Activated B cell treated with CpG ODN at 0.5 μM for 24 hours (primary cell): ENCODE measurements at regions of chr11 and their contacts with region 1.

Region 1: GRCh38 chr11:118145285-118146227 is 7.1 kb downstream of the SCN4B start:
- DNase-seq: peak; percentile 74
- ATAC-seq: peak; percentile 99
- H3K4me3 Mint-ChIP-seq: peak overlapping the region; percentile 82
- H3K27ac Mint-ChIP-seq: no peak overlapping the region
- H3K4me1 Mint-ChIP-seq: peaks cover 5% of the 10 kb centered on the region
- H3K27me3 Mint-ChIP-seq: peaks cover 68% of the 10 kb centered on the region
- CTCF ChIP-seq: no peak

Region 2: DNA sequence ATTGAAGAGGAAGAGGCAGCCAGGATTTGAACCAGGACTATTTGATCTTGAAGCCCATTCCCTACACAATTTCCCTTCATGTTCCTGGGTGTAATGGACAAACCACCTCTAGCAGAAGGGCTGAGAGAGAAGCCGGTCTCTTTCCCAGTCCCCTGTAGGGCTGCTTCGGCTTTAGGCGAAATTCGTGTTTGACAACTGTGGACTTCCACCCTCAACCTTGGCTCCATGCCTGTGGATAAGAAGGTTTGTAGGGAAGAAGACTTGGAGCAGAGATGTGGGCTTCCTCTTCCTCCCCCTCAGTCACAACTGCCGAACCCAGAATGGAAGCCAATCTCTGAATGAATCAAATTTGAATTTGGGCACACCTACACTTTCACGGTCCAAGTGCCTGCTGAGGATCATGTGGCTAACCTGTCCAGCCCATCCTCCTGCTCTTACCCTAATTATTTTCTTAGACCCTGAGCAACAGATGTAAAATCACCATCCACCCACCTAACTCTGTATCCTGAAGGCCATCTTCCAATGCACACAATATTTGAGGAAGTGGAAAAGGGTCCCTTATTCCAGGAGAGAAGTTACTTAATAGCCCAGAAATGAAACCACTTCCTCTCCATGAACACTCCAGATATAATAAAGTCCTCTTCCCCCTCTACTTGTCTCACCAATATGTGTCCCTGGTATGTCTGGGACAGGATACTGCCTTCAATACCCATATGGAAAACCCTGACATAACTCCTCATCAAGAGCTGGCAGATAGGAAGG is 41.0 kb after region 1 on chr11:
- CTCF ChIA-PET with region 1: no interaction called
- POLR2A ChIA-PET with region 1: no interaction called
- intact Hi-C with region 1: no loop called
- DNase-seq: no peak
- ATAC-seq: no peak
- H3K4me3 Mint-ChIP-seq: no peak overlapping the region
- H3K27ac Mint-ChIP-seq: no peak overlapping the region
- H3K4me1 Mint-ChIP-seq: no peaks in the 10 kb centered on the region
- H3K27me3 Mint-ChIP-seq: peaks cover 28% of the 10 kb centered on the region
- CTCF ChIP-seq: no peak

Region 3: GRCh38 chr11:118198370-118198769 is 52.8 kb after region 1 on chr11:
- CTCF ChIA-PET with region 1: interaction called, 8 read pairs
- POLR2A ChIA-PET with region 1: no interaction called
- intact Hi-C with region 1: loop called (anchors 1 kb)
- DNase-seq: peak; percentile 70
- ATAC-seq: peak; percentile 90
- H3K4me3 Mint-ChIP-seq: peak overlapping the region; percentile 21
- H3K27ac Mint-ChIP-seq: no peak overlapping the region
- H3K4me1 Mint-ChIP-seq: peaks cover 2% of the 10 kb centered on the region
- H3K27me3 Mint-ChIP-seq: peaks cover 2% of the 10 kb centered on the region
- CTCF ChIP-seq: peak; percentile 65

Region 4: DNA sequence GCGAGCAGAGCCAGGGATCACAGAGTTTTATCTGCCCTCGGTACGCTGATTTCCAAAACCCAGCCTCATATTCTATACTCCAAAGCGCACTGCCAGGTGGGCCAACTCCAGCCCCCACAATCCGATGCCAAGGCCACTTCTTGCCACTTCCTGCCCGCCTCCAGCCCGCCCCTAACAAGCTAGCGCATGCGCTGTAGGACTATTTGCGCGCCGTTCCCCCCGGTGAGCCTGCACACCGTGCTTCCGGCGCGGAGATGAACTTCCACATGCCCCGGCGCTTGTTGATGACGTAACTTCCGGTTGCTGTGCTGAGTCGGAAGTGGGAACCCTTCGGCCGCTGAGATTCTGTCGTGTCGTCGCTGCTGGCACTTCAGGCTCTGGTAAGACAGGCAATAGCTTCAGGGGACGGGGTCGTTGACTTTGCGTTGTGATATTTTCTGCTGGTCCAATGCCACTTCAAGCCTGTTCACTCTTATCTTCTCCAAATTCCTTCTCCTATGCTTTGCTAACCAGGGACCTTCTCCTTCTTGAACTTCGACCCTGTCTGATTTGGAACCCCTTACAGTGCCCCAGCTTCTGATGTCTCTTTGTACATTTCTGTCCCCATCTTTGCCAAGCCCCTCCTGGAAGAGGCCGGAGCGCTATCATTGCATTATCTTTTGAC is 213.9 kb after region 1 on chr11 and contains the start of gene UBE4A:
- CTCF ChIA-PET with region 1: no interaction called
- POLR2A ChIA-PET with region 1: no interaction called
- intact Hi-C with region 1: loop called (anchors 1 kb)
- DNase-seq: peak; percentile 93
- ATAC-seq: peak; percentile 86
- H3K4me3 Mint-ChIP-seq: peak within 1 kb of the TSS; percentile 98
- H3K27ac Mint-ChIP-seq: peak within 1 kb of the TSS; percentile 94
- H3K4me1 Mint-ChIP-seq: peaks cover 39% of the 10 kb centered on the region
- H3K27me3 Mint-ChIP-seq: no peaks in the 10 kb centered on the region
- CTCF ChIP-seq: no peak
- total RNA-seq, gene UBE4A: 28.4 and 34.2 TPM in 2 replicates

Region 5: GRCh38 chr11:118565051-118565450 is 419.5 kb after region 1 on chr11:
- CTCF ChIA-PET with region 1: no interaction called
- POLR2A ChIA-PET with region 1: no interaction called
- intact Hi-C with region 1: loop called (anchors 5 kb)
- DNase-seq: no peak
- ATAC-seq: no peak
- H3K4me3 Mint-ChIP-seq: peak overlapping the region; percentile 68
- H3K27ac Mint-ChIP-seq: peak overlapping the region; percentile 20
- H3K4me1 Mint-ChIP-seq: peaks cover 10% of the 10 kb centered on the region
- H3K27me3 Mint-ChIP-seq: no peaks in the 10 kb centered on the region
- CTCF ChIP-seq: no peak

Region 6: DNA sequence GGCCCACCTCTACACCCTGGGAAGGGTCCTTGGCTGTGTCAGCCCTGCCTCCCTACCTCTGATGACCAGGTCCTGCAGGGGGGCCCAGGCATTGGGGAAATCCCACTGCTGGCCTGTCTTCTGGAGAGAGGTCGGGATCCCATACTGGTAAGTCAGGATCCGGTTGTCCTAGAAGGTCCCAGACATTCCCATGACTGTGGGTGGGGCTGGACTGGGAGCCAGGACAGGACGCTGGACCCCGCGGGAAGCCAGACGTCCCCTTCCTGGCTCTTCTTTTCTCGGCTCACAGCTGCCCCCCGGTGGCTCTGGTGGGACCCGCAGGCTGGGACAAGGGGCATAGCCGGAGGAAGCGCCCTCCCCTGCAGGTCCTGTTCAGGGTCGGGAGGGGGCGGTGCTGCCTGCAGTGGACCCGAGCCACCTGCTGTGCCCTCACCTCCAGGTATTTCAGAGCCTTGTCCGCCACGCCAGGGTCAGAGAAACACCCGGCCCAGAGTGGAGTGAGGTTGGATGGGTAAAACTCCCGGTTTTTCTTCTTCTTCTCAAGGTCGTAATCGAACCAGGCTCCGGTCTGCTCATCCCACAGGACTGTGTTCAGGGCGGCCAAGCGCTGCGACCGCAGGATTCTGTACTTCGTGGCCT is 513.9 kb after region 1 on chr11:
- CTCF ChIA-PET with region 1: no interaction called
- POLR2A ChIA-PET with region 1: no interaction called
- intact Hi-C with region 1: loop called (anchors 1 kb)
- DNase-seq: peak; percentile 80
- ATAC-seq: peak; percentile 100
- H3K4me3 Mint-ChIP-seq: no peak overlapping the region
- H3K27ac Mint-ChIP-seq: no peak overlapping the region
- H3K4me1 Mint-ChIP-seq: peaks cover 7% of the 10 kb centered on the region
- H3K27me3 Mint-ChIP-seq: peaks cover 6% of the 10 kb centered on the region
- CTCF ChIP-seq: peak; percentile 50